Activated naive CD4-positive, alpha-beta T cell treated with anti-CD3 and anti-CD28 coated beads for 36 hours (primary cell): ENCODE measurements at regions of chr3 and their contacts with region 1.

Region 1: GRCh38 chr3:160754855-160755747 is 930 bp upstream of the PPM1L start:
- DNase-seq: peak; percentile 90
- H3K4me3 Mint-ChIP-seq: peak overlapping the region; percentile 86
- H3K27ac Mint-ChIP-seq: peak overlapping the region; percentile 86
- H3K4me1 Mint-ChIP-seq: peaks cover 23% of the 10 kb centered on the region
- H3K27me3 Mint-ChIP-seq: peaks cover 12% of the 10 kb centered on the region

Region 2: GRCh38 chr3:160225176-160226025 is 529.7 kb before region 1 on chr3 and contains the start of gene C3orf80:
- CTCF ChIA-PET with region 1: no interaction called
- intact Hi-C with region 1: loop called (anchors 5 kb)
- DNase-seq: peak; percentile 57
- H3K4me3 Mint-ChIP-seq: peak within 1 kb of the TSS; percentile 66
- H3K27ac Mint-ChIP-seq: no peak within 1 kb of the TSS
- H3K4me1 Mint-ChIP-seq: peaks cover 9% of the 10 kb centered on the region
- H3K27me3 Mint-ChIP-seq: peaks cover 49% of the 10 kb centered on the region
- total RNA-seq, gene C3orf80: not detected

Region 3: DNA sequence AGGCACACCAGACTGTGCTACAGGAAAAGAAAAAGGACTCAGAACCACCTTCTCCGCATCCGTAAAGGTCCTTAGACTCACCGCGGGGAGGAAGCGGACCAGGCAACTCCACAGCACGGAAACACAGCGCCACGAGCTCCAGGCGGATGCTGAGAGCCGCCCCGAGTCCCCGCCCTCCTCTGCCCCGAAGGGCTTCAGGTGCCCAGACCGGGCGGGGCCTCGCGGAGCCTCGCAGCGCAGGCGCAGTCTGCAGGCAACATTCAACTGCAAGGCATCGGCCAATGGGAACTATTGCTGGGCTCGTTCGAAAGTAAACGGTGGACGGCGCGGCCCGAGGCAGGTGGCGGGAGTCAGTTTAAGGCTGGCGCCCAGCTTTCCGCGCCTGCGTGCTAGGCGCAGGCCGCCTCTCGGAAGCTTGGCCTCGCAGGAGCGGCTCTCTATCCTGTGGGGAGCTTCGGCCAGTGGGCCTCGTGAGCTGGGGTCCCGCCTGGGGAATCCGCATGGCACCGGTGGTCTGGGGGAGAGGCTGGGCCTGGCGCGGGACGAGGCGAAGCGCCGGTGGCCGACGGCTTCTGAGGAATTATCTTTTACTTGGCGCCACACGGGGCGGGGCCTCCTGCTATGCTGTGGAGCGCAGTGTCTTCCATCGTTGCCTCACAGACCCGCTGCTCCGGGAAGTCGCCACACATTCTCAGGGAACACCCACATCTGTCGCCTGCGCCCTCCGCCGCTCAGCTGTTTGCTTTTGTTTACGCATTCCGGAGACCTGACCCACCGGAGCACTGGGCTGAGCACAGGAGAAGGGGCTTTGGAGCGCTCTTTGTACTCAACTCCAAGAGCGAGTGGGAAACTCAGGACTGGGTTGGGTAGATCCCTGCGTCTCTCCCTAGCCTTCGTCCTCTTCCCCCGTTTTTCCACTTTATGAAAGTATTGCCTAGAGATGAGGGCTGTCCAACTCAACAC is 305.2 kb before region 1 on chr3 and contains the start of gene TRIM59:
- CTCF ChIA-PET with region 1: no interaction called
- intact Hi-C with region 1: loop called (anchors 1 kb)
- DNase-seq: peak; percentile 98
- H3K4me3 Mint-ChIP-seq: peak within 1 kb of the TSS; percentile 91
- H3K27ac Mint-ChIP-seq: peak within 1 kb of the TSS; percentile 90
- H3K4me1 Mint-ChIP-seq: peaks cover 26% of the 10 kb centered on the region
- H3K27me3 Mint-ChIP-seq: no peaks in the 10 kb centered on the region
- total RNA-seq, gene TRIM59: 25.8 TPM

Region 4: GRCh38 chr3:160565442-160566403 is 189.4 kb before region 1 on chr3 and contains the start of gene KPNA4:
- CTCF ChIA-PET with region 1: no interaction called
- intact Hi-C with region 1: loop called (anchors 1 kb)
- DNase-seq: peak; percentile 97
- H3K4me3 Mint-ChIP-seq: peak within 1 kb of the TSS; percentile 93
- H3K27ac Mint-ChIP-seq: peak within 1 kb of the TSS; percentile 97
- H3K4me1 Mint-ChIP-seq: peaks cover 40% of the 10 kb centered on the region
- H3K27me3 Mint-ChIP-seq: no peaks in the 10 kb centered on the region
- total RNA-seq, gene KPNA4: 43.2 to 59.4 TPM

Region 5: GRCh38 chr3:160725338-160725737 is 29.8 kb before region 1 on chr3:
- CTCF ChIA-PET with region 1: no interaction called
- intact Hi-C with region 1: no loop called
- DNase-seq: no peak
- H3K4me3 Mint-ChIP-seq: no peak overlapping the region
- H3K27ac Mint-ChIP-seq: no peak overlapping the region
- H3K4me1 Mint-ChIP-seq: no peaks in the 10 kb centered on the region
- H3K27me3 Mint-ChIP-seq: peaks cover 3% of the 10 kb centered on the region

Region 6: GRCh38 chr3:160780245-160780644 is 25.1 kb after region 1 on chr3:
- CTCF ChIA-PET with region 1: no interaction called
- intact Hi-C with region 1: no loop called
- DNase-seq: no peak
- H3K4me3 Mint-ChIP-seq: no peak overlapping the region
- H3K27ac Mint-ChIP-seq: no peak overlapping the region
- H3K4me1 Mint-ChIP-seq: no peaks in the 10 kb centered on the region
- H3K27me3 Mint-ChIP-seq: no peaks in the 10 kb centered on the region

Region 7: DNA sequence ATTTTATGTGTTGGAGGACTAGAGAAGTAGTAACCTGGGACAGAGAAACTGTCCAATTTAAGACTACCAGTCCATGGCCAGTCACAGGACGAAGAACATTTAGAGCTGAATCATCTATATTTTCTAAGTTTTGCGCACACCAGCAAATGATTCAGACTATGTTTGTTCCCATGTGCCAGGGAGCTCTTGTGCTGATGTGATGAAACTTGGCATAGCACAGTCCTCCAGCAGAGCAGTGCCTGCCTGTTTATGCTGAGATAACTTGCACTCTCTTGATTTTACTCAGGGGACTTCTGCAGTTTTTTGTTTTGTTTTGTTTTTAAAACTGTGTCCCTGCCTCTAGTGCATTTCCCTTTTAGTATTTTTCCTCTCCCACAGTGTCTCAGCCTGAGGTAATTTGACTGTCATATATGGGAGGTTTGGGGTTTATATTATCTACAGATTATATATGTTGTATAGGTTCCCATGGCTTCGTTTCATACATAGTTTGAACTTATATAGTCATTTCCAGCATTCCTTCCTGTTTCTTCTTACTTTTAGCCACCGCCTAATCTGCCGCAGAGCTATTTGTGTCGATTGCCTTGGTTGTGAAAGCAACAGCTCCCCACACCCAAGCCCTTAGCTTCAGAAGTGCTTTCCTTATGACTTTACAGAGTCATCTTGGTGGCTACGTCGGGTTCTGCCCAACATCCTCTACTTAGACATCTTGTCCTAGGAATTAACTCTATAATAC is 46.5 kb after region 1 on chr3:
- CTCF ChIA-PET with region 1: interaction called, 4 read pairs
- intact Hi-C with region 1: loop called (anchors 1 kb)
- DNase-seq: peak; percentile 72
- H3K4me3 Mint-ChIP-seq: no peak overlapping the region
- H3K27ac Mint-ChIP-seq: peak overlapping the region; percentile 69
- H3K4me1 Mint-ChIP-seq: peaks cover 10% of the 10 kb centered on the region
- H3K27me3 Mint-ChIP-seq: no peaks in the 10 kb centered on the region

Region 8: GRCh38 chr3:160929595-160929994 is 174.5 kb after region 1 on chr3:
- CTCF ChIA-PET with region 1: interaction called, 3 read pairs
- intact Hi-C with region 1: loop called (anchors 5 kb)
- DNase-seq: no peak
- H3K4me3 Mint-ChIP-seq: no peak overlapping the region
- H3K27ac Mint-ChIP-seq: no peak overlapping the region
- H3K4me1 Mint-ChIP-seq: no peaks in the 10 kb centered on the region
- H3K27me3 Mint-ChIP-seq: peaks cover 3% of the 10 kb centered on the region